ENCODE measurements at regions of chr3 and their contacts with region 1.

Region 1: DNA sequence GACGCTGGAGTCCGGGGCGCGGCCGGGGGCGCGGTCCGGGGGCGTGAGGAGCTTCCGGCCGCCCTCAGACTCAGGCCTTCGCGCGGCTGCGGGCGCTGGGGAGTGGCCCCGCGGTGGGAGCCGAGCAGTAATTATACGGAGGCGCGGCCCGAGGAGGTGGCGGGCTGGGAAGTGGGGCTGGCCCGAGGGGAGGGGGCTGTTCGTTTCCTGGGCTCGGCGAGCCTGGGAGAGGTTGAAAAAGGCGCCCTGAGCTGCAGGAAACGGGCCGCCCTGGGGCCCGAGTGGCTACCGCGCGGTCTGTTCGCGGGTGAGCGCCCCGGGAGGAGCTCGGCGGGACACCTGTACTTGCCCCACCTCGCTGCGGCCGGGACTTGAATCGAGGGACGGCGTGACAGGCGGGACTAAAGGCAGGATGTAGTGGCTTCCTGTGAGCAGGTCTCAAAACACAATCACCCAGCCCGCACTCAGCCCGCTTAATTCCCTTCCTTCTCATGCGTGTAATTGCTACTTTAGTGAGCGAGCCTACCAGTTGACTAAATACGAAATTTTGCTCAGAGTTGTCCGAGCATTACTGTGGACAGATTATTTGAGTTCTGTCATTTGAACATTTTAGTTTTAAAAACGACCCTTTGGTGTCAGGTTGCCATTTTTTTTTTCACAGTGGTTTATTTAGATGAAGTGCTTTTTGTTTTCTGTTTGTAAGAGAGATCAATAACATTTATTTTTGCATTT is 860 bp downstream of the RASA2 start:
- DNase-seq: peak; percentile 85
- H3K4me3 Mint-ChIP-seq: peak overlapping the region; percentile 93
- H3K27ac Mint-ChIP-seq: peak overlapping the region; percentile 93
- H3K4me1 Mint-ChIP-seq: peaks cover 66% of the 10 kb centered on the region
- H3K27me3 Mint-ChIP-seq: peaks cover 2% of the 10 kb centered on the region

Region 2: DNA sequence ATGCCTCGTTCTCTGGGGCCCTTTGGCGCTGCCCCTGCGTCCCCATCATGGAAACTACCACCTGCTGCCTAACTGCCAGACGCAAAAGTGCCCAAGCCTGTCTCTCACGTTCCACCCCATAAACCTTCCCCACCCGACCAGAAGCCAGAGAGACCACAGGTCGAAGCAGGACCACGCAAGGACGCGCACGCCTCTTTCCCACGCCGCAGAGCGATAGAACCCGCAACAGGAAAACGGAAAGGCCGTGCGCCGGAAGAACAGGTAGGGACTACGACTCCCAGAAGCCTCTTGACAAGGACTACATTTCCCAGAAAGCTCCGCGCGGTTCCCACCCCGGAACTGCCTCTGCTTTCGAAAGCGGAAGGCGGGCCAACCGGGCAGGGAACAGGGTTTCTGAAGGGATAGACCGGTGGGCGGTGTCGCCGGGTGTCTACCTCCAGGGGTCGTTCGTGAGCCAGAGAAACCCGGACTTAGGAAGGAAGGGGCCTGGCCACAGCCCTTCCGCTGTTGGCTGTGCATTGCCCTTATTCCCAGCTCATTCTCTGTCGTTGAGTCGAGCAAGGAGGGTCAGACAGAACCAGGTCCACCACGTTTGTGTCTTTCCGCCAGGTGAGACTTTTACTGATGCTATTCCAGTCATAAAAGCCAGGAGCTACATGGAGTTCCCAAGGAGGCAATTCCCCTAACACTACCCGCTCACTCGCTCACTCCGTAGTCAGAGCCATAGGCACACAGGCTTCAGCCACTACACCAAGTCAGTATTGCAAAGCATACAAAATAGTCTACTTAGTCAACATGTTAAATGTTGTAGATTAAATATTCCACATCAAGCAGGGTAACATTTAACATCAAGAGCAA is 176.0 kb before region 1 on chr3:
- intact Hi-C with region 1: loop called (anchors 1 kb)
- DNase-seq: peak; percentile 97
- H3K4me3 Mint-ChIP-seq: peak overlapping the region; percentile 95
- H3K27ac Mint-ChIP-seq: peak overlapping the region; percentile 98
- H3K4me1 Mint-ChIP-seq: peaks cover 51% of the 10 kb centered on the region
- H3K27me3 Mint-ChIP-seq: no peaks in the 10 kb centered on the region

Region 3: DNA sequence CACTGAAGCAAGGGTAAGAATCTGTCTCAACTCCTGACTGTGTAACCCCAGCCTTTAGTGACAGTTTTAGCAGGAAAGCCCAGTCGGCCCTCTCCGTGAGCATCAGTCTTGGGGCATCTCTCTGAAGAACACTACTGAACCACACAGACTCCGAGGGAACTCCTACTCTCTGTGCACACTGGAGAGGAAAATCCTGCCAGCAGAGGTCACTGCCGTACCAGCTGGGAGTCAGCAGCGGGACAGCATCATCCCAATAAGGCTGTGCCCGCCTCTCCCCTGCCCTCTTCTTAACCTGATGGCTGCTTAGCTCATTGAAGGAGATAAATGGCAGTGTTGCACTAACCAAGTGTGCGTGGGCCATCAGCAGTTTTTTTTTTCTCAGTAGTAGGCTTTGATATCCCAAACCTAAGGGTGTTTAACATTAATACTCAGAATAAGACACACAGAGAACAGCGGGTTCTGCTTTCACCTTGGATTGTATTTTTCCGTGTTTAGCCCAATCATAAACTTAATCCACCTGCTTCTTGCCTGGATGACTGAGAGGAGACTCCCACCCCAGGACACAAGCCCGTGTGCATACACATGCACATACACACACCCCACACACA is 27.5 kb before region 1 on chr3:
- intact Hi-C with region 1: loop called (anchors 1 kb)
- DNase-seq: peak; percentile 78
- H3K4me3 Mint-ChIP-seq: no peak overlapping the region
- H3K27ac Mint-ChIP-seq: no peak overlapping the region
- H3K4me1 Mint-ChIP-seq: peaks cover 26% of the 10 kb centered on the region
- H3K27me3 Mint-ChIP-seq: no peaks in the 10 kb centered on the region

Region 4: DNA sequence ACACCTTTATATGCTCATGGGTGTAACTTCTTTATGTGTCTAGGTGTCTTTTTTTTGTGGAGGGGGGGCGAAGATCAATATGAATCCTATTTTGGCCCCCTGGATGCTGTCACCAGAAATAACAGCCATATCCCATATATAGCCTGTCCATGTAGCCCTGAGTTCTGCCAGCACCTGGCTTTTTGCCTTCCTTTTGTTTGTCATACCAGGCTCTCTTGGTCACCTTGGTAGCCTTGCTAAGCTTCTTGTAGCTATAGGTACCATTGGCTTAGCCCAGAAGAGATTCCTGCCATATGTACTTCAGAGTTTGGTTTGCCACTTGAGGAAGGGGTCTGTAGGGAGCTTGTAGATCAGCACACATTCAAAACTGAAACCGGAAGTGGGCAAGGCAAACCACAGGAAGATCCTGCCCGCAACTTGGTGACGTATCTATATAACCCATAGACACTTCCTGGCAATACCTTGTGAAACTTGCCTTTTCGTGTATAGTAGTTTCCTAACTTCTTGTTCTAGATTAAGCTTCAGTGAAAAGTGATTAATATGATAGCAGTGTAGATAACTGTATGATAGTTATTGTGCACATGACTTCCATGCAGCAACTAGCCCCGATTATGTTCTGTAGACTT is 11.0 kb after region 1 on chr3:
- intact Hi-C with region 1: loop called (anchors 1 kb)
- DNase-seq: peak; percentile 89
- H3K4me3 Mint-ChIP-seq: peak overlapping the region; percentile 54
- H3K27ac Mint-ChIP-seq: peak overlapping the region; percentile 83
- H3K4me1 Mint-ChIP-seq: peaks cover 66% of the 10 kb centered on the region
- H3K27me3 Mint-ChIP-seq: no peaks in the 10 kb centered on the region

Region 5: GRCh38 chr3:141544697-141545096 is 57.0 kb after region 1 on chr3:
- intact Hi-C with region 1: loop called (anchors 1 kb)
- DNase-seq: peak; percentile 6
- H3K4me3 Mint-ChIP-seq: peak overlapping the region; percentile 67
- H3K27ac Mint-ChIP-seq: peak overlapping the region; percentile 81
- H3K4me1 Mint-ChIP-seq: peaks cover 60% of the 10 kb centered on the region
- H3K27me3 Mint-ChIP-seq: no peaks in the 10 kb centered on the region

Region 6: GRCh38 chr3:141561426-141562034 is 73.8 kb after region 1 on chr3:
- intact Hi-C with region 1: loop called (anchors 1 kb)
- DNase-seq: peak; percentile 17
- H3K4me3 Mint-ChIP-seq: no peak overlapping the region
- H3K27ac Mint-ChIP-seq: peak overlapping the region; percentile 61
- H3K4me1 Mint-ChIP-seq: peaks cover 24% of the 10 kb centered on the region
- H3K27me3 Mint-ChIP-seq: no peaks in the 10 kb centered on the region

Region 7: DNA sequence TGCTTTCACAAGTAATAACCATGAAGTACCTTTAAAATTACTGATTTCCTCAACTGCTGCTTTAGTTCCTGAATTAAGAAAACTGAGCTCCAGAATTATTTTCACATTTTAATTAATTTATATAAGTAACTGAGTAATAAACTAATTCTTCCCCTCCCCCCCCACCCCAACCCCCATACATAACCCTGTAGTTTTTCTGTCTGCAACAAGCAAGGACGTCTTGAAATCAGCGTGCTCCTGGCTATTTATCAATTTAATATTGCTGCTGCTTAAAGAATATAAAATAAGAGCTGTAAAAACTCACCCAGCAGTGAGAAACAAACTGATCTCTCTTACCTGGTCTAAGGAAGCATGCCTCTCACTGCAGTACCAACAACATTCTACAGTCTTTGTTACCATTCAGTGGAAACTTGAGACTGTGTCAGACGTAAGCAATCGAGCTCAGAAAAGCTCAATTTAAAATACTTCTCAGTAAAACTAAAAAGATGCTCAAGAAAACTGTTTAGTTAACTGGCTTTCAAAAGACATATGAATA is 540.6 kb after region 1 on chr3:
- intact Hi-C with region 1: loop called (anchors 10 kb)
- DNase-seq: peak; percentile 22
- H3K4me3 Mint-ChIP-seq: peak overlapping the region; percentile 87
- H3K27ac Mint-ChIP-seq: peak overlapping the region; percentile 49
- H3K4me1 Mint-ChIP-seq: peaks cover 18% of the 10 kb centered on the region
- H3K27me3 Mint-ChIP-seq: no peaks in the 10 kb centered on the region